HEK293T (cell line): ENCODE measurements at regions of chr14 and their contacts with region 1.

Region 1: GRCh38 chr14:23095196-23096108 is at the start of gene C14orf119:
- DNase-seq: peak; percentile 99

Region 2: GRCh38 chr14:23057757-23058653 is 37.4 kb before region 1 on chr14:
- CTCF ChIA-PET with region 1: interaction called, 3 read pairs
- POLR2A ChIA-PET with region 1: interaction called, 51 read pairs
- DNase-seq: peak; percentile 87

Region 3: DNA sequence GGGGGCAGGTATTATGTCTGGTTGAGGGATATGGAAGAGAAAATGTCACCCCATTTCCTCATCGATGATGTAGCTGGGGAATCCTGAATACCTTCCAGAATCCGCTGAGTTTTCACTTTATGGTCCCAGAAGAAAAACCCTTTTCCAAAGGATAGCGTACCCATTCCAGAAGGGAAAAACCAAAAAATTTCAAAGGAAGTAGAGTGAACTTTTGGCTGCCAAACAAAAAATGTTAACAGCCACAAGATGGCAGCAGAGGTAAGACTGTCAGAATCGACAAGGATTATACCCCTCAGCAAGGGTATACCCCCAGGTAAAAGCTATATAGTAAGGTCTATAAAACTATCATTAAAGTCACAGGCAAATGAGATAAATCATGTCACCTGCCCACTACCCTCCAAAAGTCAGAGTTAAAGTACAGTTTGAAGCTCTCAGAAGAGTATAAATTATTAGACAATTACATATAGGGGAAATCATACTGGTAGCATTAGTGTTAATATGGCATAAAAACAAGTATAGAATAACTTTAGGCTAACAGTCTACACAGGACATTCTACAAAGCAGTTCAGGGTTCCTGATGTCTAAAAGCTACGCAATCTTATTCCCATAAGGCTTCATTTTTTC is 18.6 kb before region 1 on chr14:
- CTCF ChIA-PET with region 1: interaction called, 19 read pairs
- POLR2A ChIA-PET with region 1: interaction called, 71 read pairs
- DNase-seq: peak; percentile 40

Region 4: GRCh38 chr14:23120541-23121251 is 25.2 kb after region 1 on chr14:
- CTCF ChIA-PET with region 1: interaction called, 12 read pairs
- POLR2A ChIA-PET with region 1: interaction called, 10 read pairs
- DNase-seq: peak; percentile 94

Region 5: GRCh38 chr14:23137192-23137829 is 41.9 kb after region 1 on chr14:
- CTCF ChIA-PET with region 1: no interaction called
- POLR2A ChIA-PET with region 1: no interaction called
- DNase-seq: no peak

Region 6: GRCh38 chr14:23286020-23286905 is 190.8 kb after region 1 on chr14 and contains the start of gene HOMEZ:
- CTCF ChIA-PET with region 1: no interaction called
- POLR2A ChIA-PET with region 1: interaction called, 14 read pairs
- DNase-seq: peak; percentile 92